ENCODE measurements at regions of chr7 and their contacts with region 1.

Region 1: GRCh38 chr7:2863461-2864066 is 19.5 kb upstream of the GNA12 start:
- DNase-seq: peak; percentile 84
- H3K4me3 ChIP-seq: peak overlapping the region; percentile 27
- H3K27ac ChIP-seq: peak overlapping the region; percentile 99
- H3K27me3 ChIP-seq: no peaks in the 10 kb centered on the region
- CTCF ChIP-seq: no peak

Region 2: GRCh38 chr7:2844165-2844898 is 19.2 kb before region 1 on chr7 and contains the start of gene GNA12:
- CTCF ChIA-PET with region 1: interaction called, 17 read pairs
- POLR2A ChIA-PET with region 1: interaction called, 15 read pairs
- DNase-seq: peak; percentile 96
- H3K4me3 ChIP-seq: peak within 1 kb of the TSS; percentile 77
- H3K27ac ChIP-seq: peak within 1 kb of the TSS; percentile 11
- H3K27me3 ChIP-seq: no peaks in the 10 kb centered on the region
- CTCF ChIP-seq: no peak
- polyA plus RNA-seq, gene GNA12: 97.4 and 110 TPM in 2 replicates

Region 3: GRCh38 chr7:2850066-2850825 is 13.3 kb before region 1 on chr7:
- CTCF ChIA-PET with region 1: interaction called, 17 read pairs
- POLR2A ChIA-PET with region 1: interaction called, 15 read pairs
- DNase-seq: no peak
- H3K4me3 ChIP-seq: no peak overlapping the region
- H3K27ac ChIP-seq: no peak overlapping the region
- H3K27me3 ChIP-seq: no peaks in the 10 kb centered on the region
- CTCF ChIP-seq: no peak

Region 4: DNA sequence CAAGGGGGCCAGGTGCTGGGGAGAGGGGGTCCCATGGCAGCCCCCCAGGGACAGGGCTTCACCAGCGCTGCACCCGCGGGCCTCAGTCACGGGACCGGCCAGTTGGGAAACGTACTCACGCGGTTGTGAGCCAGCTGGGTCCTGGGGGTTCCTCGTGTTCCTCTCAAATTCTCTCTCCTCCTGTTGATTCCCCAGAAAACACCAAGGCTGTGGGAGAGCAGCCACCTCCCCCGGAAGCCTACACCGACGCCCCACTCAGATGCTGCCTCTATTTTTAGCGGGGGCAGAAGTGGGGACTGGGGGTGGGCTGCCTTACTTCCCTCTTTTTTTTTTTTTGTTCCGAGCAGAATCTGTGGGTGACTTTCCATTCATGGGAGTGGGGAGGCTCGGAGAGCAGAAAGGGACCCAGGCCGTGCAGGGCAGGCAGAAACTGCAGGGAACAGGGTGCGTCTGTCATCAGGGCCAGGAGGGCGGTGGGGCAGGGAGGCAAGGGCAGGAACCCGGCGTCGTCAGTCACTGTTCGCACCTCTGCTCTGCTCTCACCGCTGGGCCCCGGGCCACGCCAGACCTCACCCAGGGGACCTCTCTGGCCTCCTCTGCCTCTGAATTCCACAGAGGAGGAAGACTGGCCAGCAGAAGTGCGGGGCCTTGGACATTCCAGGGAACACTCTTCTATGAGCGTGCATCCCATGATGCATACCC is 117.0 kb after region 1 on chr7:
- CTCF ChIA-PET with region 1: no interaction called
- POLR2A ChIA-PET with region 1: no interaction called
- DNase-seq: no peak
- H3K4me3 ChIP-seq: no peak overlapping the region
- H3K27ac ChIP-seq: no peak overlapping the region
- H3K27me3 ChIP-seq: peaks cover 16% of the 10 kb centered on the region
- CTCF ChIP-seq: no peak

Region 5: DNA sequence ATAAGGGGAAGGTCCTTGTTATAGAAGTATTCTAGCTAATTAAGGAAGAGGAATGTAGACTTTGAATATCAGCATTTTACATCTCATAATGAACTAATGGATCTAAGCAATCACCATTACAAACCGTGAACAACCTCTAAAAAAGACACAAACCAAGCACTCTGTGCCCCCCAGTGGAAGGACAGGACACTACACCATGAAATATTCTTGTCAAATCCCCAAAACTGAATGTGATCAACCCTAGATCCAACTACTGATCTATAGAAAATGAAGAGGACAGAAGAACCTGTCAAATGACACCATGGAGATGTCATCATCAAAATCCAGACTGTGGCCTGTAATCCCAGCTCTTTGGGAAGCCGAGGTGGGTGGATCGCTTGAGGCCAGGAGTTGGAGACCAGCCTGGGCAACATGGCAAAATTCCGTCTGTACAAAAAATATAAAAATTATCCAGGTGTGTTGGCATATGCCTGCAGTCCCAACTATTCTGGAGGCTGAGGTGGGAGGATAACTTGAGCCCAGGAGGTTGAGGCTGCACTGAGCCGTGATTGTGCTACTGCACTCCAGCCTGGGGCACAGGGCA is 291.4 kb after region 1 on chr7:
- CTCF ChIA-PET with region 1: interaction called, 26 read pairs
- POLR2A ChIA-PET with region 1: no interaction called
- DNase-seq: peak; percentile 8
- H3K4me3 ChIP-seq: no peak overlapping the region
- H3K27ac ChIP-seq: no peak overlapping the region
- H3K27me3 ChIP-seq: peaks cover 10% of the 10 kb centered on the region
- CTCF ChIP-seq: peak; percentile 73

Region 6: DNA sequence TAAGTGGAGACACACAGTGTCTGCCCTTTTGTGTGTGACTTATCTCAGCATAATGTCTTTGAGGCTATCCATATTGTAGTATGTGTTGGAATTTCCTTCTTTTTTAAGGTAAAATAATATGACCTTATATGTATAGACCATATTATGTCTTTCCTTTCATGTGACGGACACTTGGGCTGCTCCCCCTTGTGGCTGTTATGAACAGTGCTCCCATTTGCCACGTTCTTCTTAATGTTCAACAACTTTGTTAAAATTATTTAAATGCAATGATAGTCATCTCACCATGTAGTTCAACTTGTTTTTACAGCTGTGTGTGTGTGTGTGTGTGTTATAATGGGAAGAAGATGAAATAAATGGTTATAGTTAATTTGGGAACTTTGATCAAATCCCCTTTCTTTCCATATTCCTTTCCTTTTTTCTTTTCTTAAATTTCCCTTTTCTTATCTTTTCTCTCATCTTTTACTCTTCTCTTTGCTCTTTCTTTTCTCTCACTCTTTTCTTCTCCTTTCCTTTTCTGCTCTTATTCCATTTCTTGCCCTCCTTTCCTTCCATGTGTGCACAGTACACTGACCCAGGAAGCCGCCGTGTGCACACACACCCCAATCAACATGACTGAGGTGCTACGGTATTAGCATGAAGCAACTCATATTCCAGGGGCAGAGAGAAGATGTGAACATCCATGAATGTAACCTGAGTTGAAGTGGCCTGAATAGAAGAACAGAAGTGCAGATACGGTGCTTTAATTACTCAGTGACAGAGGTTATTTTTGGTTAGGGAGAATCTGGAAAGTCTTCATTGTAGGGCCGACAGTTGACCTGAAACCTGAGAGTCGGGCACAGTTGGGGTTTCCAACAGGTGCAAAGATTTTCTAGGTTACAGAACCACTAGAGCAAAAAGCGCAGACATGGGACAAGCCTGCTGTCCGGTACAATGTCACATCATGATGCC is 1034.1 kb after region 1 on chr7:
- CTCF ChIA-PET with region 1: interaction called, 12 read pairs
- POLR2A ChIA-PET with region 1: no interaction called
- DNase-seq: peak; percentile 11
- H3K4me3 ChIP-seq: no peak overlapping the region
- H3K27ac ChIP-seq: no peak overlapping the region
- H3K27me3 ChIP-seq: no peaks in the 10 kb centered on the region
- CTCF ChIP-seq: peak; percentile 81

Measured in AG04450 (cell line).